ENCODE measurements at regions of chr3 and their contacts with region 1.

Region 1: GRCh38 chr3:158659454-158660237 is 12.8 kb downstream of the LXN start:
- DNase-seq: peak; percentile 95
- H3K4me3 ChIP-seq: no peak overlapping the region
- H3K27ac ChIP-seq: peak overlapping the region; percentile 95
- H3K4me1 ChIP-seq: peaks cover 28% of the 10 kb centered on the region
- H3K27me3 ChIP-seq: no peaks in the 10 kb centered on the region
- CTCF ChIP-seq: peak; percentile 75 to 77
- POLR2A ChIP-seq: no peak

Region 2: DNA sequence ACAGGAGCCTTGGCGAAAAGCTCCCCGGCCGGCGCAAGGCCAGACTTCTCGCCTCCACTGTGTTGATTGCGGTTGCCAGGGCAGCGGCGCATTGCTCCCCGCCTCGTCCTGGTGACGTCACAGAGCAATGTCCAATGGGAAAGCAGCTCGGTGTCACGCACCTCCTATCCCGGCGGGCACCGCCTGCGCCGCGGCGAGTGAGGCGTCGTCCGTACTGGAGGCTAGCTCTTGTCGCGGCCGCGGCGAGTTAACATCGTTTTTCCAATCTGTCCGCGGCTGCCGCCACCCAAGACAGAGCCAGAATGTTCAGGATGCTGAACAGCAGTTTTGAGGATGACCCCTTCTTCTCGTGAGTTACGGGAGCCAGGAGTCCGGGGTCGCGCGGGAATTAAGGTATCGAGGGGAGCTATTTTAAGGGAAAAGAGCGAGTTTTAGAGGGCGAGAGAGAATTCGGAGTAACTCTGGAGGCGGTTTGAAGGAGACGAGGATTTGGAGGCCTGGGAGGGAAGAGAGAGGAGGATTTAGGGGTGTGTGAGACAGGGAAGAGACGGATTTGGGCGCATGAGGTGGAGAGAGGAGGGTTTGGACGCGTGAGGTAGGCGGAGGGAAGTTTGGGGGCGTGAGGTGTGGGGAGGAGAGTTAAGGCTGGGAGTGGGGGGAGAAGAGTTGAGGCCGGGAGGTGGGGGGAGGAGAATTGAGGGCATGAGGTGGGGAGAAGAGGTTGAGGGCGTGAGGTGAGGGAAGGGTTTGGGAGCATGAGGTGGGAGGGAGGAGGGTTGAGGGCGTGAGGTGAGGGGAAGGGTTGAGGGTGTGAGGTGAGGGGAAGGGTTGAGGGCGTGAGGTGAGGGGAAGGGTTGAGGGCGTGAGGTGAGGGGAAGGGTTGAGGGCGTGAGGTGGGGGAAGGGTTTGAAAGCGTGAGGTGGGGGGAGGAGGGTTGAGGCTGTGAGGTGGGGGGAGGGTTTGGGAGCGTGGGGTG is 88.4 kb before region 1 on chr3 and contains the start of gene MLF1:
- CTCF ChIA-PET with region 1: interaction called, 11 read pairs
- POLR2A ChIA-PET with region 1: no interaction called
- dilution Hi-C with region 1: no loop called
- intact Hi-C with region 1: loop called (anchors 5 kb)
- DNase-seq: peak; percentile 98
- H3K4me3 ChIP-seq: peak within 1 kb of the TSS; percentile 2 to 54 (median 31)
- H3K27ac ChIP-seq: peak within 1 kb of the TSS; percentile 3
- H3K4me1 ChIP-seq: no peaks in the 10 kb centered on the region
- H3K27me3 ChIP-seq: no peaks in the 10 kb centered on the region
- CTCF ChIP-seq: no peak
- POLR2A ChIP-seq: no peak
- total RNA-seq, gene MLF1: 5.3 and 8.8 TPM in 2 replicates

Region 3: GRCh38 chr3:158672293-158673176 is 12.9 kb after region 1 on chr3 and contains the start of gene LXN:
- CTCF ChIA-PET with region 1: interaction called, 38 read pairs
- POLR2A ChIA-PET with region 1: no interaction called
- dilution Hi-C with region 1: no loop called
- intact Hi-C with region 1: loop called (anchors 1 kb)
- DNase-seq: peak; percentile 92
- H3K4me3 ChIP-seq: peak within 1 kb of the TSS; percentile 39 to 90 (median 79)
- H3K27ac ChIP-seq: peak within 1 kb of the TSS; percentile 75
- H3K4me1 ChIP-seq: peaks cover 29% of the 10 kb centered on the region
- H3K27me3 ChIP-seq: no peaks in the 10 kb centered on the region
- CTCF ChIP-seq: peak; percentile 56 to 92
- POLR2A ChIP-seq: peak; percentile 87
- total RNA-seq, gene LXN: 118 and 119 TPM in 2 replicates

Region 4: GRCh38 chr3:158702815-158703481 is 43.3 kb after region 1 on chr3:
- CTCF ChIA-PET with region 1: interaction called, 14 read pairs
- POLR2A ChIA-PET with region 1: no interaction called
- dilution Hi-C with region 1: no loop called
- intact Hi-C with region 1: loop called (anchors 5 kb)
- DNase-seq: peak; percentile 89
- H3K4me3 ChIP-seq: peak overlapping the region in 1 of 3 experiments; percentile 23
- H3K27ac ChIP-seq: peak overlapping the region; percentile 80
- H3K4me1 ChIP-seq: peaks cover 52% of the 10 kb centered on the region
- H3K27me3 ChIP-seq: no peaks in the 10 kb centered on the region
- CTCF ChIP-seq: no peak
- POLR2A ChIP-seq: peak; percentile 50

Region 5: DNA sequence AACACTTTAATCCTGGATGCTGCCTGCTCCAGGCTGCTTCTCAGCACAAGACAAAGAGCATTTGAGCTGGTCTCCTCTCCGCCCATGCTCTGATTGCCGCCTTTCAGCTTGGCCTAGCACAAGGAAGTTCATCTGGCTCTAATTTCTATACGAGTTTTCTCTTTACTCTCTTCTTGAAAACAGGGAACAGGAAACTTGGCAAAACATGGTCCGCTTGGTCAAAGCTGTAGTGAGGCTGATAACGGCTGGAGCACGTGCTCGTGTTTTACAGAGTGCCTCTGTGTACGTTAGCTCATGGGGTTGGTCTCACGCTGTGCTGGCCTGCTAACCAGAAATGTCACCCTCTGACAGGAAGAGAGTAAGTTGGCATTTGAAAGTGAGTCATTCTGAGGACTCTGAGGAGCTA is 53.5 kb after region 1 on chr3:
- CTCF ChIA-PET with region 1: interaction called, 14 read pairs
- POLR2A ChIA-PET with region 1: interaction called, 4 read pairs
- dilution Hi-C with region 1: no loop called
- intact Hi-C with region 1: loop called (anchors 2 kb)
- DNase-seq: peak; percentile 99
- H3K4me3 ChIP-seq: no peak overlapping the region
- H3K27ac ChIP-seq: peak overlapping the region; percentile 59
- H3K4me1 ChIP-seq: peaks cover 47% of the 10 kb centered on the region
- H3K27me3 ChIP-seq: no peaks in the 10 kb centered on the region
- CTCF ChIP-seq: no peak
- POLR2A ChIP-seq: no peak

Region 6: DNA sequence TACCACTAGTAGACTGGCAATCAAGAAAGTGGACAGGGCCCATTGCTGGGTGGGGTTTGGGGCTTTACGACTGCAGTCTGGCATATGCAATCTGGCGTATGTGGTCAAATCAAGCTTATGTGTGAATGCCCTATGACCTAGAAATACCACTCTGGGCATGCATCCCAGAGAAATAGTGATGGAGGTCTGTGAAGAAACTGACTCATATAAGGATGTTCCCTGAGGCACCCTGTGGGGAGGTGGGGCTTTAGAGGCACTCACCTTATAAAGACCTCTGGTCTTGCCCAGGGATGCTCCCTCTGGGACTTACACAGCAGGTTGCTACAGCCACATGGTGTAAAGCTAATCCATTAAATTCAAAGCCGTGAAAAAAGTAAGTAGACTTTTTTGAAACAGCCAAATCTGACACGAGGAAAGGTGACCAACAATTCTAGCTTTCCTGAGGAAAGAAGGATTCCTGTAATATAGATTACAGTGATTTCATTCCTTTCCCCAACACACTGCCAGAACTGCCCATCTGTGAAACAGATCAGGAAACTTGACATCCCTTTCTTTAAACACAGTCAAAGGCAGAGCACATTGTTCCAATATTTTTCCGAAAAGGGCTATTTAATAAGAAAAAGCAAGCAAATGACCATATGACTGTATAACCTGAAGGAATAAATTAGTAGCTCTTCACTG is 59.0 kb after region 1 on chr3:
- CTCF ChIA-PET with region 1: interaction called, 14 read pairs
- POLR2A ChIA-PET with region 1: interaction called, 4 read pairs
- dilution Hi-C with region 1: no loop called
- intact Hi-C with region 1: loop called (anchors 2 kb)
- DNase-seq: peak; percentile 95
- H3K4me3 ChIP-seq: no peak overlapping the region
- H3K27ac ChIP-seq: peak overlapping the region; percentile 13
- H3K4me1 ChIP-seq: peaks cover 38% of the 10 kb centered on the region
- H3K27me3 ChIP-seq: no peaks in the 10 kb centered on the region
- CTCF ChIP-seq: no peak
- POLR2A ChIP-seq: no peak

Region 7: GRCh38 chr3:158801696-158802408 is 142.2 kb after region 1 on chr3 and contains the start of gene MFSD1:
- CTCF ChIA-PET with region 1: interaction called, 25 read pairs
- POLR2A ChIA-PET with region 1: no interaction called
- dilution Hi-C with region 1: no loop called
- intact Hi-C with region 1: no loop called
- DNase-seq: peak; percentile 87
- H3K4me3 ChIP-seq: peak within 1 kb of the TSS; percentile 47 to 78 (median 72)
- H3K27ac ChIP-seq: peak within 1 kb of the TSS; percentile 27
- H3K4me1 ChIP-seq: peaks cover 16% of the 10 kb centered on the region
- H3K27me3 ChIP-seq: no peaks in the 10 kb centered on the region
- CTCF ChIP-seq: no peak
- POLR2A ChIP-seq: peak; percentile 87
- total RNA-seq, gene MFSD1: 38.2 and 38.3 TPM in 2 replicates

Measured in endothelial cell of umbilical vein (primary cell).